T-cell (primary cell): ENCODE measurements at regions of chr12 and their contacts with region 1.

Region 1: DNA sequence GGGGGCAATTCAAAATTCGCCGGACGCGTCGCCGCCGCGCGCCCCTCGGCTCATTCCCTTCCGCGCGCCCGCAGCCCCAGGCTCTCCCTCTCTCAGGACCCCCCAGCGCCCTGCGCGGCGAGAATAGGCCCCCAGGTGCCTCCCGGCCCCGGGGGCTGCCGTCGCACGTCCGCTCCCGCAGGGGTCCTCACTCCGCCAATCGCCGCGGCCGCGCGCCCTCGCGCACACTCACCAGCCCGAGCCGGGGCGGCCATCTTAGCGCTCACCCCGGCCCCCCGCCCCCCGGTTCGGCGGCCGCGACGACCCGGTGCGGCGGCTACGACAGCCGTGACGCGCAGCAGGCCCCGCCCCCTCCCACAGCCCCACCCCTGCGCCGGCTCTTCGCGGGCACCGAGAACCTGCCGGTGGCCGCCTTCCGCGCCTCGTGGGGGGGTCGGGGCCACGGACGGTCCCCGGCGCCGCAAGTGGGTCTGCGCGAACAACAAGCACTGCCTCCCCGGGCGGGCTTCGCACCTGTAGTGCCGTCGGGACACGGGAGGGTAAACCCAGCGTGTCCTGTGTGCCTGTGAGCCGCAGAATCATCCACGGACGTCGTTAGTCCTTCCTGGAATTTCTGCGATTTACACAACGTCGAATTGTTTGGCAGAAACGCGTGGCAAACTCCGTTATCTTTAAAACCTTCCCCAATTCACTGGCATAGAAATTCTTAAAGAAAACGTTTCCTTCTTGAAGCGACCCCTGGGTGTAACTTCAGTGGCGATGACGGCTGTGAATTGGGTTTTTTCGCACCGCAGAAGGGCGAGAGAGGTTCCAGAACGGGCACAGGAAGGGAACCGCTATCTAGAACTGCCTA is 2.5 kb downstream of the USP44 start:
- DNase-seq: peak; percentile 33 to 84 (median 61)
- ATAC-seq: peak; percentile 82 to 88 (median 85)
- H3K4me3 ChIP-seq: peak overlapping the region; percentile 71 to 94
- H3K4me3 Mint-ChIP-seq: peak overlapping the region; percentile 87 to 90 (median 90)
- H3K27ac ChIP-seq: peak overlapping the region; percentile 90
- H3K27ac Mint-ChIP-seq: peak overlapping the region; percentile 79 to 87
- H3K4me1 ChIP-seq: peaks cover 24 to 33% of the 10 kb centered on the region in 2 experiments
- H3K4me1 Mint-ChIP-seq: peaks cover 59 to 61% (median 61%) of the 10 kb centered on the region in 3 donors
- H3K27me3 ChIP-seq: peaks cover 3% of the 10 kb centered on the region in 2 experiments
- H3K27me3 Mint-ChIP-seq: peaks cover 0 to 10% of the 10 kb centered on the region in 2 donors

Region 2: GRCh38 chr12:95054206-95054605 is 494.6 kb before region 1 on chr12:
- CTCF ChIA-PET with region 1: no interaction called
- POLR2A ChIA-PET with region 1: interaction called in 1 of 2 experiments, 11 read pairs
- DNase-seq: no peak
- ATAC-seq: no peak
- H3K4me3 ChIP-seq: no peak overlapping the region
- H3K4me3 Mint-ChIP-seq: no peak overlapping the region
- H3K27ac ChIP-seq: no peak overlapping the region
- H3K27ac Mint-ChIP-seq: no peak overlapping the region
- H3K4me1 ChIP-seq: no peaks in the 10 kb centered on the region
- H3K4me1 Mint-ChIP-seq: no peaks in the 10 kb centered on the region
- H3K27me3 ChIP-seq: no peaks in the 10 kb centered on the region
- H3K27me3 Mint-ChIP-seq: no peaks in the 10 kb centered on the region

Region 3: DNA sequence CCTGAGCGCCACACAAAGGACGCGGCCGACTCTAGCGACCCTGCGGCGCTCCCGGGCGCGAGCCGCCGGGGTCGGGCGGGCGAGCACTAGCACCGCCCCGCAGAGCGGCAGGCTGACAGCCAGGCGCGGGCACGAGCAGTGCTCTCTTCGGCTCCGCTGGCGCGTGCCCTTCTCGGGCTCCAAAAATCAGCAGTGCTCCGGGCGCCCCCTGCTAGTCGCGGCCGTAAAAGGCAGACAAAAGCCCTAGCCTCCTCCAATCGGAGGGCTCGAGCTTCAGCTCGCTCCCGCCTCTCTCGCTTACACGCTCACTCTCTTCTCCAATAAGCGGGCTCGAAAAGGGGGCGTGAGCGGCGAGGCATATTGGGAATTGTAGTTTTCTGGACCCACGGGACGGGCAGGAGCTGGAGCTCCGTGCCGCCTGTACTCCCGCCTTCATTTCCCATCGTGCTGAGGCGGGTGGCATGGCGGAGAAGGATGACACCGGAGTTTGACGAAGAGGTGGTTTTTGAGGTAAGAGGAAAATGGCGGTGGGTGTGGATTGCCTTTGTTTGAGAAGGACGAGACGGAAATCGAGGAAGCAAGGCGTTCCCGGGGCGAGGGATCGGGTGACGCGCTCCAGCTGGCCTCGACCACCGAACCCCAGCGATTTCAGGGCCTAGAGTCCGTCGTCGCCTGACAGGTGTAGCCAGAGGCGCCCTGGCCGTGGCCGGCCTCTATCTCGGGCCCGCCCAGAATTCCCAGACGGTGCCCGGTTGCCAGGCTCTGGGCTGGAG is 331.2 kb before region 1 on chr12 and contains the starts of genes FGD6 and VEZT:
- CTCF ChIA-PET with region 1: no interaction called
- POLR2A ChIA-PET with region 1: interaction called in 1 of 2 experiments, 10 read pairs
- DNase-seq: peak; percentile 94 to 99 (median 98)
- ATAC-seq: peak; percentile 90 to 95 (median 93)
- H3K4me3 ChIP-seq: peak within 1 kb of the TSS; percentile 83 to 98
- H3K4me3 Mint-ChIP-seq: peak within 1 kb of the TSS; percentile 88 to 100 (median 98)
- H3K27ac ChIP-seq: peak within 1 kb of the TSS; percentile 96
- H3K27ac Mint-ChIP-seq: peak within 1 kb of the TSS; percentile 96 to 99
- H3K4me1 ChIP-seq: peaks cover 7 to 15% of the 10 kb centered on the region in 2 experiments
- H3K4me1 Mint-ChIP-seq: peaks cover 38 to 42% (median 42%) of the 10 kb centered on the region in 3 donors
- H3K27me3 ChIP-seq: no peaks in the 10 kb centered on the region
- H3K27me3 Mint-ChIP-seq: no peaks in the 10 kb centered on the region
- total RNA-seq, gene FGD6: 0.55 to 1.9 (median 0.70) TPM
- total RNA-seq, gene VEZT: 27.0 to 48.9 (median 36.8) TPM

Region 4: DNA sequence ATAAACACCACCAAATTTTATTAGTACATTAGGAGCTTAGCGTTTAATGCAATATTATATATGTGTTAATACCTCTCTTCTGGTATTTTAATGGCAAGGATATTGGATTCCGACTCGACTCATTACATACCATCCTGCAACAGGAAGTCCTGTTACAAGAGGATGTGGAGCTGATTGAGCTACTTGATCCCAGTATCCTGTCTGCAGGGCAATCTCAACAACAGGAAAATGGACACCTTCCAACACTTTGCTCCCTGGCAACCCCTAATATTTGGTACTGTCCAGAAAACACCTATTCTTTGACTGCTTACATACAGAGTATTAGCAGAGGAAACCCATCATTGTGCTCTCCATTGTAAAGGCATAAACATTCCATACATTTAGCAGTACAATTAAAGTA is 286.0 kb before region 1 on chr12:
- CTCF ChIA-PET with region 1: no interaction called
- POLR2A ChIA-PET with region 1: no interaction called
- DNase-seq: no peak
- ATAC-seq: no peak
- H3K4me3 ChIP-seq: no peak overlapping the region
- H3K4me3 Mint-ChIP-seq: no peak overlapping the region
- H3K27ac ChIP-seq: no peak overlapping the region
- H3K27ac Mint-ChIP-seq: no peak overlapping the region
- H3K4me1 ChIP-seq: no peaks in the 10 kb centered on the region
- H3K4me1 Mint-ChIP-seq: no peaks in the 10 kb centered on the region
- H3K27me3 ChIP-seq: no peaks in the 10 kb centered on the region
- H3K27me3 Mint-ChIP-seq: no peaks in the 10 kb centered on the region

Region 5: DNA sequence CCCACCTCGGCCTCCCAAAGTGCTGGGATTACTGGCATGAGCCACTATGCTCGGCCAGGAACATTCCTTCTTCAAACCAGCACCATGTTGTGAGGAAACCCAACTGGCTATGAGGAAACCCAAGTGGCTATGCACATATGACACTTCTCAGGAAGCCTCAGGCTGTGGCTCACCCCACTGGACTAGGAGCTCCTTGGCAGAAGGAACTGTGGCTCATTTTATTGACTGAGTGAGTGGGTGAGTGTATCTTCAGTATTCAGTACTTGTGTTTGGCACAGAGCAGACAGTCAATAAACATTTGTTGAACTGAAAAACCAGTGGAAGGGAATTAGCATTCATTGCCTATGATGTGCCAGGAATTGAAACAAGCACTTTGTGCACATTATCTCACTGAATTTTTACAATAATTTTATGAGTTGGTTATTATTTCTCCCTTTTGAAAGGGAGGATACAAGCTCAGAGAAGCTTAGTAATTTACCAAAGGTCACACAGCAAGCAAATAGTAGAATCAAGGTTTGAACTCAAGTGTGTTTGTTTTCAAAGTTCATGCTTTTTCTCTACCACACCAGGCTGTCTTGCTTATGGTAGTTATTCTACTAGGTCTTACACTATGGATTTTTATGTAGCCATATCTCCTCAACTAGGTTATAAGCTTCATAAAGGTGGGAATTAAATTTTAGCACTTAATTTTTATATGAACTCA is 209.5 kb before region 1 on chr12:
- CTCF ChIA-PET with region 1: interaction called in 1 of 2 experiments, 12 read pairs
- POLR2A ChIA-PET with region 1: no interaction called
- DNase-seq: no peak
- ATAC-seq: no peak
- H3K4me3 ChIP-seq: no peak overlapping the region
- H3K4me3 Mint-ChIP-seq: no peak overlapping the region
- H3K27ac ChIP-seq: no peak overlapping the region
- H3K27ac Mint-ChIP-seq: no peak overlapping the region
- H3K4me1 ChIP-seq: no peaks in the 10 kb centered on the region
- H3K4me1 Mint-ChIP-seq: peaks cover 0 to 4% (median 4%) of the 10 kb centered on the region in 3 donors
- H3K27me3 ChIP-seq: peaks cover 0 to 6% of the 10 kb centered on the region in 2 experiments
- H3K27me3 Mint-ChIP-seq: no peaks in the 10 kb centered on the region

Region 6: DNA sequence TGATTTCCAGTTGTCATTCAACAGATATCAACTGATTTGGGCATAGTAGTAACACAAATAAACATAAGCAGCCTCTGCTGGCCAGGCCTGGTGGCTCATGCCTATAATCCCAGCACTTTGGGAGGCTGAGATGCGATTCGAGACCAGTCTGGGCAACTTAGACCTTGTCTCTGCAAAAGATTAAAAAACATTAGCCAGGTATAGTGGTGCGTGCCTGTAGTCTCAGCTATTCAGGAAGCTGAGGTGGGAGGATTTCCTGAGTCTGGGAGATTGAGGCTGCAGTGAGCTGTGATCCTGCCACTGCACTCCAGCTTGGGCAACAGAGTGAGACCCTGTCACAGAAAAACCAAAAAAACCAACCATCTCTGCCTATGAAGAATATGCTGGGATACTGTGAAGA is 67.7 kb before region 1 on chr12:
- CTCF ChIA-PET with region 1: no interaction called
- POLR2A ChIA-PET with region 1: interaction called, 6 to 10 read pairs
- DNase-seq: no peak
- ATAC-seq: peak; percentile 19 to 51 (median 40)
- H3K4me3 ChIP-seq: no peak overlapping the region
- H3K4me3 Mint-ChIP-seq: peak overlapping the region in 1 of 3 donors; percentile 48
- H3K27ac ChIP-seq: no peak overlapping the region
- H3K27ac Mint-ChIP-seq: peak overlapping the region; percentile 82 to 84
- H3K4me1 ChIP-seq: peaks cover 8 to 17% of the 10 kb centered on the region in 2 experiments
- H3K4me1 Mint-ChIP-seq: peaks cover 56 to 65% (median 64%) of the 10 kb centered on the region in 3 donors
- H3K27me3 ChIP-seq: no peaks in the 10 kb centered on the region
- H3K27me3 Mint-ChIP-seq: no peaks in the 10 kb centered on the region

Region 7: GRCh38 chr12:95532851-95533250 is 15.9 kb before region 1 on chr12:
- CTCF ChIA-PET with region 1: interaction called, 10 to 11 read pairs
- POLR2A ChIA-PET with region 1: interaction called, 3 to 5 read pairs
- DNase-seq: no peak
- ATAC-seq: no peak
- H3K4me3 ChIP-seq: no peak overlapping the region
- H3K4me3 Mint-ChIP-seq: no peak overlapping the region
- H3K27ac ChIP-seq: no peak overlapping the region
- H3K27ac Mint-ChIP-seq: no peak overlapping the region
- H3K4me1 ChIP-seq: no peaks in the 10 kb centered on the region
- H3K4me1 Mint-ChIP-seq: peaks cover 9 to 28% (median 19%) of the 10 kb centered on the region in 3 donors
- H3K27me3 ChIP-seq: no peaks in the 10 kb centered on the region
- H3K27me3 Mint-ChIP-seq: no peaks in the 10 kb centered on the region